ENCODE measurements at regions of chr11 and their contacts with region 1.

Region 1: GRCh38 chr11:27183672-27184457 is 143.2 kb downstream of the BBOX1 start:
- DNase-seq: peak; percentile 29 to 74 (median 36)
- ATAC-seq: peak; percentile 81
- H3K4me3 ChIP-seq: no peak overlapping the region
- H3K27ac ChIP-seq: no peak overlapping the region
- H3K4me1 ChIP-seq: peaks cover 2 to 12% of the 10 kb centered on the region in 2 experiments; a peak in 2 of 5 replicates
- H3K27me3 ChIP-seq: no peaks in the 10 kb centered on the region
- CTCF ChIP-seq: peak; percentile 61 to 92 (median 64); a peak in 5 of 6 replicates
- EP300 ChIP-seq: no peak
- POLR2A ChIP-seq: no peak
- RAD21 ChIP-seq: peak; percentile 96

Region 2: GRCh38 chr11:27254729-27255446 is 71.0 kb after region 1 on chr11:
- CTCF ChIA-PET with region 1: no interaction called
- POLR2A ChIA-PET with region 1: no interaction called
- in situ Hi-C with region 1: loop called (anchors 10 kb)
- intact Hi-C with region 1: no loop called
- DNase-seq: no peak
- ATAC-seq: no peak
- H3K4me3 ChIP-seq: no peak overlapping the region
- H3K27ac ChIP-seq: no peak overlapping the region
- H3K4me1 ChIP-seq: no peaks in the 10 kb centered on the region
- H3K27me3 ChIP-seq: peaks cover 0 to 3% of the 10 kb centered on the region in 2 experiments; a peak in 4 of 5 replicates
- CTCF ChIP-seq: no peak
- EP300 ChIP-seq: no peak
- POLR2A ChIP-seq: no peak
- RAD21 ChIP-seq: no peak

Region 3: DNA sequence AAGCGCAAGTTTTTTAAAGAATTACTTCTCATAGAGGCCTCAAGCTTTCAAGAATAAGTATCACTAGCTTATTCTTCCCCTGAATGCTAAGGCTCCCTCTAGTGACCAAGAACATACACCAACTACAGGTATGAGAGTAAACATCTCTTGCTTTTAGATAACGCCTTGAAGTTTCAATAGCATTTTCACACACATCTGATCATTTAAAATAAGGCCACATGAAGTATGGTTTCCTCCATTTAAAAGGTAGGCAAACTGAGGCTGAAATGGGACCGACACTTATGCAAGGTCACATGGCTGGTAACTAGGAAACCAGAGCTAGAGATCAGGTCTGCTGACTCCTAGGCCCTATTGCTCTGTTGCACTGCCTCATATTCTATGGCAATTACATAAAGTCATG is 112.6 kb after region 1 on chr11:
- CTCF ChIA-PET with region 1: interaction called, 9 read pairs
- POLR2A ChIA-PET with region 1: interaction called, 3 read pairs
- in situ Hi-C with region 1: loop called (anchors 5 kb)
- intact Hi-C with region 1: loop called (anchors 1 kb)
- DNase-seq: peak; percentile 22 to 67 (median 38)
- ATAC-seq: peak; percentile 95
- H3K4me3 ChIP-seq: no peak overlapping the region
- H3K27ac ChIP-seq: no peak overlapping the region
- H3K4me1 ChIP-seq: no peaks in the 10 kb centered on the region
- H3K27me3 ChIP-seq: no peaks in the 10 kb centered on the region
- CTCF ChIP-seq: peak; percentile 52 to 81 (median 64); a peak in 5 of 6 replicates
- EP300 ChIP-seq: no peak
- POLR2A ChIP-seq: no peak
- RAD21 ChIP-seq: peak; percentile 82 to 87

Region 4: DNA sequence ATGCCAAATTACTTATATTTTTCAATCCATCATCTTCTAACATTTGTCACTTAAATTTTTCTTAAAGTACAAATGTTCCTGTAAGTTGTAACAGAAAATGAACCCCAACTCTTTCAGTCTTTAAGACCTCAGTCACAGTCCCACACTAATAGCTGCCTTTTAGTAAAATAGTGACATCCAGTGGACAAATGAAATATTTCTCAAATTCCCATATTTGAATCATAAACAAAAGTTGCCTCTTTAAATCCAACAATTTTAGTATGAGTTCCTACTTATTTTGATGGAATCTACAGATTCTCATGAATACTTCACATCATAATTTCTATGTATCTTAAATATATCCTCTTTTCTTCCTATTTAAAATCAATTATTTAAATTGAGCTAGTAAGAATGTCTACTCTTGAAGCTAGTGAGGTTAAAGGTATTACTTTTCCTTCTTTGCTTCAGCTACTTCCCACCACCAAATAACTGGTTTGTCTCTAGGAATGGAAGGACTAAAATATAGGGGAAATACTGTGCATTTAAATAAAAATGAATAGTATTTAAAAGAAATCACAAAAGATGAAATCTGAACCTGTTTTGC is 313.5 kb after region 1 on chr11:
- CTCF ChIA-PET with region 1: interaction called, 11 read pairs
- POLR2A ChIA-PET with region 1: no interaction called
- in situ Hi-C with region 1: no loop called
- intact Hi-C with region 1: no loop called
- DNase-seq: peak in 3 of 4 experiments; percentile 20 to 30 (median 21)
- ATAC-seq: peak; percentile 73
- H3K4me3 ChIP-seq: no peak overlapping the region
- H3K27ac ChIP-seq: no peak overlapping the region
- H3K4me1 ChIP-seq: no peaks in the 10 kb centered on the region
- H3K27me3 ChIP-seq: no peaks in the 10 kb centered on the region
- CTCF ChIP-seq: peak in 2 of 3 experiments; percentile 20 to 60; a peak in 3 of 6 replicates
- EP300 ChIP-seq: no peak
- POLR2A ChIP-seq: no peak
- RAD21 ChIP-seq: peak; percentile 41 to 55